SK-N-SH (cell line): ENCODE measurements at regions of chr10 and their contacts with region 1.

Region 1: DNA sequence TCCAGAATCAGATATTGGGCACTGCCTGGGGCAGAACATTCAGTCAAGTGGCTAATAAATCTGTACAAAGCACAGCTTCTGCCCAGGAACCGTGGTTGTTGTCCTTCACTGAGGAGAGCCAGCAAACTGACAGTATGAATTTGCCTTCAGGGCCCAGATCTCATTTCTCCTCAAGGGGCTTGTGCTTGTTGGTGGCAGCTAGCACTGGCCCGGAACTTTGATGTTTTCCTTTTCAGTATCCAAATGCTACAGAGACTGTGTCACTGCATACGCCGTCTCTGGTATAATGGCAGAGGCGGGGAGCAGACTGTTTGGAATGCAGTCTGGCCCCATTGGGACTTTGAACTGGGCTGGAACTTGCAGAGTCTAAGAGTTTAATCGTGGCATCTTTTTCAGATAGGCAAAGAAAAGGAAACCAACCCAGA is 30.4 kb upstream of the ADD3 start:
- DNase-seq: no peak
- H3K4me3 ChIP-seq: no peak overlapping the region
- H3K27ac ChIP-seq: peak overlapping the region; percentile 79 to 93
- H3K4me1 ChIP-seq: peaks cover 11 to 43% of the 10 kb centered on the region in 2 experiments
- H3K27me3 ChIP-seq: no peaks in the 10 kb centered on the region
- CTCF ChIP-seq: no peak
- EP300 ChIP-seq: no peak; a peak in 1 of 4 replicates
- RAD21 ChIP-seq: no peak

Region 2: DNA sequence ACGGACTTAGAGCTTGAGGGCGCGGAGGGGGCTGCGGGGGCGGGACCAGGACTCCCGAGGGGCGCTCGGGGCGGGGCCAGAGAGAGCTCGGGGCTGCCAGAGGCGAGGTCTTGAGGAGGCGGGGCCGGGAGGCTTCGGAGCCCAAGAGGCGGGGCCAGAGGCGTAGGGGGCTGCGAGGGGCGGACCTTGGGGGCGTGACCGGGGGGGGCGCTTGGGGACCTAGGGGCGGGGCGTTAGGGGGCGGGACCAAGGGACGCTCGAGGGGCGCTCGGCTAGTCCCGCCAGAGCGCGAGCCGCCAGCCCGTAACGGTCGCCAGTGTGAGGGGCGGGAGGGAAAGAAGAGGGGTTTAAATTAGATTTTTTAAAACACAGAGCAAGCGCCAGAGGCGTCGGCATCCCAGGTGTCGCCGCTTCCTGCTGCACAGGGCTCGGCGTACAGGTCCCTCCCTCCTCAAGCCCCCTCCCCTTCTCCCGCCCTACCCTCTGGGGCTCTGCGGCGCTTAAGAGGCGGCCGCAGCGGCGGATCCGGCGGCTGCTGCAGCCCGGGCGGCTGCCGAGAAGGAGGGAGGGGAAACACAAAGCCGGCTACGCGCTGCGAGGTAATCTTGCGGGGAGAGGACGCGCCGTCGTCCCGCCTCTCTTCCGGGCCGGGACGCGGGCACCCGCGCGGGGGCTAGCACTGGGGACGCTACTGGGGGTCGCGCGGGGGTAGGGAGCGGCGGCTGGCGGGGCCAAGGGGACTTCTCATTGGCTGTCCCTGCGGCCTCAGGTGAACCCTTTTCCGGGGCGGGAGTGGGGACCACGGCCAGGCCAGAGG is 30.5 kb after region 1 on chr10 and contains the start of gene ADD3:
- CTCF ChIA-PET with region 1: interaction called, 3 read pairs
- POLR2A ChIA-PET with region 1: interaction called, 13 read pairs
- DNase-seq: peak; percentile 99
- H3K4me3 ChIP-seq: peak within 1 kb of the TSS; percentile 72 to 89
- H3K27ac ChIP-seq: peak within 1 kb of the TSS; percentile 68 to 94
- H3K4me1 ChIP-seq: peaks cover 32 to 34% of the 10 kb centered on the region in 2 experiments; a peak in 3 of 4 replicates
- H3K27me3 ChIP-seq: no peaks in the 10 kb centered on the region
- CTCF ChIP-seq: no peak
- EP300 ChIP-seq: 0 out of 4 replicates have a peak, but pooled peaks of 1 of the 2 experiments have one; percentile 14
- RAD21 ChIP-seq: no peak
- polyA plus RNA-seq, gene ADD3: 27.6 and 144 TPM in 2 replicates